Activated CD4-positive, alpha-beta memory T cell treated with anti-CD3 and anti-CD28 coated beads for 36 hours (primary cell): ENCODE measurements at regions of chr1 and their contacts with region 1.

Region 1: GRCh38 chr1:98794196-98794886 is 132.8 kb downstream of the SNX7 start:
- DNase-seq: peak; percentile 56
- H3K4me3 Mint-ChIP-seq: no peak overlapping the region
- H3K27ac Mint-ChIP-seq: no peak overlapping the region
- H3K4me1 Mint-ChIP-seq: peaks cover 23% of the 10 kb centered on the region
- H3K27me3 Mint-ChIP-seq: no peaks in the 10 kb centered on the region

Region 2: DNA sequence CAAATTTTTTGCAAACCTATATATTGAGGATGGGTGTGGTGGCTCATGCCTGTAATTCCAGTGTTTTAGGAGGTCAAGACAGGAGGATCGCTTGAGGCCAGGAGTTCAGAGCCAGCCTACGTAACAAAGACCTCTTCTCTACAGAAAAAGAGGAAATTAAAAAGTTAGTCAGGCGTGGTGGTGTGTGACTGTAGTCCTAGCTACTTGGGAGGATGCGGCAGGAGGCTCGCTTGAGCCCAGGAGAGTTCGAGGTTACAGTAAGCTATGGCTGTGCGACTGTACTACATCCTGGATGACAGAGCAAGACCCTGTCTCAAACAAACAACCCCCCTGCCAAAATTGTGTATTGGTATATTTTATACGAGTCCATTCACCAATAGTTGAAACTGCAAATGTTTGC is 1463.2 kb before region 1 on chr1:
- CTCF ChIA-PET with region 1: no interaction called
- POLR2A ChIA-PET with region 1: no interaction called
- intact Hi-C with region 1: no loop called
- DNase-seq: no peak
- H3K4me3 Mint-ChIP-seq: no peak overlapping the region
- H3K27ac Mint-ChIP-seq: no peak overlapping the region
- H3K4me1 Mint-ChIP-seq: no peaks in the 10 kb centered on the region
- H3K27me3 Mint-ChIP-seq: no peaks in the 10 kb centered on the region

Region 3: DNA sequence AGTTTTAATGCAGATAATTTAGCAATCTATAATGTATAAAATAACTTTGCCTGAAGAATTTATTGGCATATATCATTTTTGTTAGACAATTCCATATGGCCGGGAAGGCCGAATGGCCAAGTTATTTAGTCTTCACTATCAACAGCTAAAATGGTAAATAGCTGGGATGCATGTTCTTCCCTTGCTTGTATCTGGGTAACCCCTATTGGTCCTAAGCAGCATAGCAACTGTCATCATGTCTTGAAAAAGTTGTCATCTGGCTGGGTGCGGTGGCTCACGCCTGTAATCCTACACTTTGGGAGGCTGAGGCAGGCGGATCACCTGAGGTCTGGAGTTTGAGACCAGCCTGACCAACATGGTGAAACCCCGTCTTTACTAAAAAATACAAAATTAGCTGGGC is 533.5 kb before region 1 on chr1:
- CTCF ChIA-PET with region 1: no interaction called
- POLR2A ChIA-PET with region 1: no interaction called
- intact Hi-C with region 1: no loop called
- DNase-seq: no peak
- H3K4me3 Mint-ChIP-seq: no peak overlapping the region
- H3K27ac Mint-ChIP-seq: no peak overlapping the region
- H3K4me1 Mint-ChIP-seq: no peaks in the 10 kb centered on the region
- H3K27me3 Mint-ChIP-seq: no peaks in the 10 kb centered on the region

Region 4: DNA sequence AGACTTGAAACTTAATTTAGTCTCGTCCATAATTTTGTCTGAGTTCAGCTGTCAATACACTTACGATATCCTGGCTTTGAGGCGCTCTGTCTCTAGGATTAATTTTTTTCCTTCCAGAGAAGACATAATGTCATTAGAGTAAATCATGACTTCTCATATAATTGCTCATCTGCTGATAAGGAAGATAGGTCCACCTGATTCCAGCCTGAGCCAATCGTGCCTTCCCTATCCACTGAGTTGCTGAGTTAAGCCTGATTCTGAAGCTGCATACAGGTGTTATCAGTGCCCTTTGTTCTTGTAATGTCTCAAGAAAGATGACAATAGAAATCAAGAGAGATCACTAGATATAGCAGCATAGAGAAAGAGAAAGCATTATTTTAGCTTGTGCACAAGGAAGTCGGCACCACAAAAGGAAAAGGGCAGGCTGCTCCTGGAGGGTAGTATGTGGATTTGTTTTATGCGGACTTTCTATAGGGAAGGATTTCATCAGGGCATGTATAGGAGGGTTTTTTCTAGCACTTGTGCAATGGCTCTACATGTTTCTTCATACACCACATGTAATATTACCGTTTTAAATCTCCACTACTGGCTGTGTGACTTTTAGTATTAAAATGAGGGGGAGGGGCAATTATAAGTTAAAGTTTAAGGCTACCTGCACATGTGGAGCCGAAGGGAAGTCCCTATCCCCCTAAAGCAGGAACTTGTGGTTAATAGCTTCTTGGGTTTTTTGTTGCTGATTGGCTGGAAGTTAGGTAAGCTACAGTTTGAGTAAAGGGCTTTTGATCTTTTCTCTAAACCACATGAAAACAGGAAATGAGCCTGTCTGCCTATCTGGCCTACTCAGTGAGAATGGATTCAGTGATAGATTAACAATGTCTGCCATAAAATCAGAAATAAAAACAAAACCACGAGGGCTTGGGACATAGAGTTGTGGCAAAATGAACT is 76.9 kb after region 1 on chr1:
- CTCF ChIA-PET with region 1: interaction called, 3 read pairs
- POLR2A ChIA-PET with region 1: no interaction called
- intact Hi-C with region 1: loop called (anchors 1 kb)
- DNase-seq: peak; percentile 31
- H3K4me3 Mint-ChIP-seq: peak overlapping the region; percentile 65
- H3K27ac Mint-ChIP-seq: peak overlapping the region; percentile 94
- H3K4me1 Mint-ChIP-seq: peaks cover 21% of the 10 kb centered on the region
- H3K27me3 Mint-ChIP-seq: no peaks in the 10 kb centered on the region

Region 5: GRCh38 chr1:98940722-98941079 is 146.4 kb after region 1 on chr1:
- CTCF ChIA-PET with region 1: interaction called, 5 read pairs
- POLR2A ChIA-PET with region 1: no interaction called
- intact Hi-C with region 1: loop called (anchors 2 kb)
- DNase-seq: peak; percentile 46
- H3K4me3 Mint-ChIP-seq: no peak overlapping the region
- H3K27ac Mint-ChIP-seq: no peak overlapping the region
- H3K4me1 Mint-ChIP-seq: peaks cover 9% of the 10 kb centered on the region
- H3K27me3 Mint-ChIP-seq: no peaks in the 10 kb centered on the region

Region 6: GRCh38 chr1:99119188-99119587 is 324.8 kb after region 1 on chr1:
- CTCF ChIA-PET with region 1: no interaction called
- POLR2A ChIA-PET with region 1: no interaction called
- intact Hi-C with region 1: loop called (anchors 10 kb)
- DNase-seq: no peak
- H3K4me3 Mint-ChIP-seq: no peak overlapping the region
- H3K27ac Mint-ChIP-seq: no peak overlapping the region
- H3K4me1 Mint-ChIP-seq: no peaks in the 10 kb centered on the region
- H3K27me3 Mint-ChIP-seq: no peaks in the 10 kb centered on the region

Region 7: GRCh38 chr1:99481391-99481996 is 687.2 kb after region 1 on chr1:
- CTCF ChIA-PET with region 1: interaction called, 27 read pairs
- POLR2A ChIA-PET with region 1: no interaction called
- intact Hi-C with region 1: loop called (anchors 2 kb)
- DNase-seq: peak; percentile 12
- H3K4me3 Mint-ChIP-seq: no peak overlapping the region
- H3K27ac Mint-ChIP-seq: no peak overlapping the region
- H3K4me1 Mint-ChIP-seq: no peaks in the 10 kb centered on the region
- H3K27me3 Mint-ChIP-seq: peaks cover 10% of the 10 kb centered on the region

Region 8: DNA sequence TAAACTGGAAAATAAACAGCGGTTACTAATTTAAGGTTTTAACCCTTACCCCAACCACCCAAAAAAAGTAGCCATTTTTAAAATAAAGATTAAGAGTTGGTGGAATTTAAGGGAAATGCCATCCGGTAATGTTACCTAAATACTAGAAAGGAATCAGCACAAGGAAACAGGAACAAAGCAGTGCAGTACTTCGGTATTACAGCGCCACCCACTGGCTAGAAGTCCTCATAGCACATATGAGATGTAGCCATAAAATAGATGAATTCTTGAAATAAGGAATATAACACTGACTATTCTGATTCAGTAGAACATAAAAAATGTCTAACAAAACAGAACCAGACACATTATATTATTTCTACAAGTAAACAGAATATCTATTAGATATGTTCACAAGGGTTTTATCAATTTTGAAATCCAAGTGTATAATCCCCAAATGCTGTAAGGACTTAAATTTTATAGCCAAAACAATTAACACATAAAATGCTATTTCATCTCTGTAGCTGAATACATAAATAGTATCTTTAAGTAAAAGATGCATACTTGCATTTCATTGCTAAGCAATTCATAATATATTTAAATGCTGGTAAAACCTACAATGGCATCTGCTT is 913.3 kb after region 1 on chr1:
- CTCF ChIA-PET with region 1: no interaction called
- POLR2A ChIA-PET with region 1: no interaction called
- intact Hi-C with region 1: loop called (anchors 1 kb)
- DNase-seq: peak; percentile 73
- H3K4me3 Mint-ChIP-seq: no peak overlapping the region
- H3K27ac Mint-ChIP-seq: no peak overlapping the region
- H3K4me1 Mint-ChIP-seq: peaks cover 15% of the 10 kb centered on the region
- H3K27me3 Mint-ChIP-seq: no peaks in the 10 kb centered on the region